Activated B cell treated with CpG ODN at 0.5 μM for 24 hours (primary cell): ENCODE measurements at regions of chr2 and their contacts with region 1.

Region 1: DNA sequence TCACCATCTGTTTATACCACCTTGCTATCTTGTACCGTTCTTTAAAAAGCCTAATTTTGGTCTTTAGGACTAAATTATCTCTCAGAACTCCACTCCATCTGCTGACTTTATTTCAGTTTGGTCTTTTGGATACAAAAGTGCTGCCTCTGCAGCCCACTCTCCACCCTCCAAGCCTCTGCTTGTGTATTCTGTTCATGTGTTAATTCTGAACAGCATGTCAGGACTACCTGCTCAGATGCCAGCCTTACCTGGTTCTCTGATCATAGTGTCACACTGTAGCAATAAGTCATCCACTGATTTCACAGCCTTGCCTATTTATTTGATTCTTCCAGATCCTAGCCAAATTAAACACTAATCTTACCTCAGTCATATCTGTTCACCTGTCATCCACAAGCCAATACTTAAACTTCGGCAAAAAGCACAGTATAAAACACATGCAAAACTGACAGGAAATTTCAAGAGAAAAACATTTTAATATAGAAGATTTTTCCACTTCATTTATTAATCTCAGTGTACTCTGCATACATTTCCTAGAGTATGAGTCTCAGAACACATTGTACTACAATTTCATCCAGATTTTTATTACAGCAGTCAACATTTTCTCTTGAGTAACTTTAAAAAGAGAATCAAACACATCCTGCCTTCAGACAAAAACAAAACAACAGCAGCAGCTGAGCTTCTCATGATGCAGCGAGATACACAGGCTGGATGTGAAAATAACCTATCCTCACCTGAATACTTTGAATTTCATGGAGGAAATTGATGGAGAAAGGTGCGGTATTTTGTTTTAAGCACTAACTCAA is 64.9 kb downstream of the PPP1R1C start:
- DNase-seq: no peak
- ATAC-seq: no peak
- H3K4me3 Mint-ChIP-seq: no peak overlapping the region
- H3K27ac Mint-ChIP-seq: no peak overlapping the region
- H3K4me1 Mint-ChIP-seq: no peaks in the 10 kb centered on the region
- H3K27me3 Mint-ChIP-seq: no peaks in the 10 kb centered on the region
- CTCF ChIP-seq: no peak

Region 2: DNA sequence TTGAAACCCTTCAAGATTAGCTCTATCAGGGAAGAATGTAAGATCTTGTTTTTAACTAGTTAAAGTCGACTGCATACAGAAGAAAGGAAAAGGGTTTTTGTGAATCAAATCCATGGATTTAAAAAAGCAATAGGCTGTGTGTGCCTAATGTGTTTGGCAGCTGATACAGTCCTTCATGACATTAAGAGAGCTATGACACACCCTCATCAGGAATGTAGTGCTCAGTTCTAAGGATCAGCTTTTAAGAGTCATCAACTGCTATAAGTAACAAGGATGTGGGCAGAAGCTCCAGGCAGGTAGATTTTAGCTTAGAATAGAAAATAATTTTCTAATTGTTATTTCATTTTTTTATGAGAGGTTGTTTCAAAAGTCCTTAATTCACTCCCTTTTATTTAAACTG is 12.0 kb before region 1 on chr2:
- CTCF ChIA-PET with region 1: no interaction called
- POLR2A ChIA-PET with region 1: no interaction called
- intact Hi-C with region 1: loop called (anchors 1 kb)
- DNase-seq: no peak
- ATAC-seq: no peak
- H3K4me3 Mint-ChIP-seq: no peak overlapping the region
- H3K27ac Mint-ChIP-seq: no peak overlapping the region
- H3K4me1 Mint-ChIP-seq: no peaks in the 10 kb centered on the region
- H3K27me3 Mint-ChIP-seq: no peaks in the 10 kb centered on the region
- CTCF ChIP-seq: no peak